CD4-positive, alpha-beta memory T cell (primary cell): ENCODE measurements at regions of chr1 and their contacts with region 1.

Region 1: DNA sequence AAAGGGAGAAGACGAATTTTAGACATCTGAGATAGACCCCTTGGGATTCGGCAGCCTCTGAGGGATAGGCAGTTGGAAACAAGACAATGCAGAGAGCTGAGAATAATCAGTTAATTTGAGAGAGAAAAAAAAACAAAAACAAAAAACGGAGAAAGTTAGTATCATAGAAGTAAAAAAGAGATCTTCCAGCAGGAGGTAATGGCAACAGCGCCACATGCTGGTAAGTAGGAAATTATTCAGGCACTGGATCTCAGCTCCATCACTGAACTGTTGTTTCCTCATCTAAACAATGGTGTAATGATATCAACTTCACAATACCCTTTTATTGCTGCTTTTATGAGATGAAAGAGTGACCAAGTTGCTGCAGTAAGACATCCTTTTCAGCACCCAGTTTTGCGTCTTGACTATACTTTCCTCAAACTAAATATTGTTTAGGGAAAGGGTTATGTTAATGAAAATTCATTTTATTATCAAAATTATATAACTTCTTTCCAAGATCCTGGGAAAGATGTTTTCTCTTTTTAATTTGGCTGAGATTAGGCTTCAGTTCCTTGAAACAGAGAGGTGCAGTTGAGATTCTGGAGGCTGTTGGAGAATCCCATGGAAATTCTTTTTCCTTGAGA is 91.4 kb upstream of the KCNA3 start:
- DNase-seq: peak; percentile 59 to 71 (median 68)
- H3K4me3 ChIP-seq: no peak overlapping the region
- H3K4me3 Mint-ChIP-seq: no peak overlapping the region
- H3K27ac ChIP-seq: no peak overlapping the region
- H3K27ac Mint-ChIP-seq: peak overlapping the region in 1 of 7 donors; percentile 80
- H3K4me1 ChIP-seq: peaks cover 4% of the 10 kb centered on the region
- H3K4me1 Mint-ChIP-seq: peaks cover 0 to 9% (median 2%) of the 10 kb centered on the region in 4 donors
- H3K27me3 ChIP-seq: no peaks in the 10 kb centered on the region
- H3K27me3 Mint-ChIP-seq: peaks cover 12% of the 10 kb centered on the region in 2 donors

Region 2: DNA sequence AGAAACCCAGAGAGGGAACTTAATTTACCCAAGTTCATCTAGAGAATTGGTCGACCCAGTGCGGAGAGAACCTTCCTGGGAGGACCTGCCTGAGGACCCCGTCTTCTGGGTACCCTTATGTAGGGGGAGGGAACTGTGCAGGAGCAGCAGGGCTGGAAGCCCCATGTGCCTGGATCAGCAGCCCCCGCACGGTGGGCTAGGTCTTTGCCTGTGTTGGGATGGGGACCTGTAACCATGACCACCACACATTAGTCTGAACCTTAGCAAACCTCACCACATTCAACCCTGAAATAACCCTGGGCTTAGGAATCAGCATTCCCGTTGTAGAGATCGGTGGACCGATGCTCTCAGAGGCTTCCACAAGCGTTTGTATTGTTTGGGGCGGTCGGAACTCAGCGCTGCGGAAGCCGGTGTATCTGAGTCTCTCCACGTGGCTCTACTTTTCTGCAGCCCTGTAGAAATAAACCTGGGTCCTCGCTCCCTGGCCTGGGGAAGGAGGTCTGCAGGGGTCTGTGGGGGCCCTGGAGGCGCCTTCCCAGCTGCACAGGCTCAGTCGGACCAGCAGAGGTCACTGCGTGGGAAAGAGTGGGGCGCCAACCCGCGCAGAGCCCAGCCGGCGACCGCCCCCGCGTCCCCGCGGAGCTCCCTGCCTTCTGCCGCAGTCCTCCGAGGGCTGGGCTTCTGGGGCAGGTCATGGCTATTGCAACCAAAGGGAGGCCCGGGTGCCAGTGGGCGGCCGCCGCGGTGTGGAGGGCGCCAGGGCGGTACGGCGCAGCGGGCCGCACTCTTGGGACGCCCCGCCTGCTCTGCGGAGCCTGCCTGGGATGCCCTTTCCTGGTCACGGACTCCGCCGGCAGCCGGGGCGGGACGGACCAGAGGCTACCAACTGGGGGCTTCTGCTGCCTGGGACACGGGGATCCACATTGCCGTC is 211.0 kb before region 1 on chr1:
- CTCF ChIA-PET with region 1: interaction called, 37 read pairs
- POLR2A ChIA-PET with region 1: no interaction called
- intact Hi-C with region 1: loop called (anchors 1 kb)
- DNase-seq: peak in 4 of 5 donors; percentile 43 to 56 (median 51)
- H3K4me3 ChIP-seq: no peak overlapping the region
- H3K4me3 Mint-ChIP-seq: peak overlapping the region in 6 of 8 donors; percentile 29 to 68 (median 50)
- H3K27ac ChIP-seq: no peak overlapping the region
- H3K27ac Mint-ChIP-seq: no peak overlapping the region
- H3K4me1 ChIP-seq: peaks cover 3% of the 10 kb centered on the region
- H3K4me1 Mint-ChIP-seq: peaks cover 2 to 9% (median 4%) of the 10 kb centered on the region in 4 donors
- H3K27me3 ChIP-seq: peaks cover 18% of the 10 kb centered on the region
- H3K27me3 Mint-ChIP-seq: peaks cover 30 to 43% of the 10 kb centered on the region in 2 donors

Region 3: GRCh38 chr1:110605901-110606656 is 160.1 kb before region 1 on chr1 and contains the start of gene KCNA2:
- CTCF ChIA-PET with region 1: interaction called, 15 read pairs
- POLR2A ChIA-PET with region 1: interaction called, 7 read pairs
- intact Hi-C with region 1: no loop called
- DNase-seq: peak in 1 of 5 donors; percentile 15
- H3K4me3 ChIP-seq: peak within 1 kb of the TSS; percentile 54 to 59
- H3K4me3 Mint-ChIP-seq: peak within 1 kb of the TSS; percentile 81 to 90 (median 84)
- H3K27ac ChIP-seq: no peak within 1 kb of the TSS
- H3K27ac Mint-ChIP-seq: peak within 1 kb of the TSS in 1 of 7 donors; percentile 47
- H3K4me1 ChIP-seq: peaks cover 21% of the 10 kb centered on the region
- H3K4me1 Mint-ChIP-seq: peaks cover 6 to 30% (median 16%) of the 10 kb centered on the region in 4 donors
- H3K27me3 ChIP-seq: peaks cover 31% of the 10 kb centered on the region
- H3K27me3 Mint-ChIP-seq: peaks cover 25 to 47% of the 10 kb centered on the region in 2 donors
- total RNA-seq, gene KCNA2: 1.2 to 2.2 TPM

Region 4: DNA sequence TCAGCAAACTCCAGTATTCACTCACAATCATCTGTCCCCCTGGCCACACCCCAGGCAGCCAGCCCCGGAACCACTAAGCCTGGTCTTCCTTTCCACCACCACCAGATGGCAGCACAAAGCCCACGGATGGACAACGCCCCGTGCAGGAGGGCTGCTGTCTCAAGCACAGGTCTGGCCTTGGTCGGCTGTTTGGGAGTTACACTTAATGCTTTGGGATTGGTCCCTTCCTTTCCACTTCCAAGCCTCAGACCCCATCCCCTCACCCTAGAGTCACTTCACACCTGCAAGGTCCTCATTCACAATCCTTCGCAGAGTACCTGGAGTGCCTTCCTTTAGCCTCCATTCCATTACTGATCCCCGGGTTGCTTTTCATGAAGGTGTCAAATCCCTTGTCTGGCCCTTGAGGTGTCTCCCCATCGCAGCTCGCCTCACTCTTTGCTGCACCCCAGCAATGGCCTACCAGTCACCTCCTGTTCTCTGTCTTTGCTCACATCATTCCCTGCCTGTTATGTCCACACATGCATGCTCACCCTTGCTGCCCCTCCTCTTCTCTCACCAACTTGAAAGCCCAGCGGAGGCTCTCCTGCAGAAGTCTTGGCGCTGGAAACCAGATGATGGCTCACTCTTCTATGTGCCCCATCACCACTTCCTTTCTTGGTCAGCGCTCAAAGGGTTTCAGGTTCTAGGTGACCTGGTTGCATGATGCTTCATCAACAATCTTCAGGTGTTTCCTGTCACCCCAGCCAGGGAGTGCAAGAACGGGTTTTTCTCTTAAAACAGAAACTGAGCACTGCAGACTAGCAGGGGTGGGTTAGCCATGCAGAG is 135.1 kb before region 1 on chr1:
- CTCF ChIA-PET with region 1: interaction called, 73 read pairs
- POLR2A ChIA-PET with region 1: interaction called, 35 read pairs
- intact Hi-C with region 1: loop called (anchors 1 kb)
- DNase-seq: peak; percentile 87 to 92 (median 88)
- H3K4me3 ChIP-seq: peak overlapping the region; percentile 25 to 46
- H3K4me3 Mint-ChIP-seq: no peak overlapping the region
- H3K27ac ChIP-seq: peak overlapping the region; percentile 72
- H3K27ac Mint-ChIP-seq: no peak overlapping the region
- H3K4me1 ChIP-seq: peaks cover 95% of the 10 kb centered on the region
- H3K4me1 Mint-ChIP-seq: peaks cover 32 to 57% (median 54%) of the 10 kb centered on the region in 4 donors
- H3K27me3 ChIP-seq: no peaks in the 10 kb centered on the region
- H3K27me3 Mint-ChIP-seq: no peaks in the 10 kb centered on the region

Region 5: GRCh38 chr1:110686188-110686587 is 79.9 kb before region 1 on chr1:
- CTCF ChIA-PET with region 1: interaction called, 10 read pairs
- POLR2A ChIA-PET with region 1: interaction called, 3 read pairs
- intact Hi-C with region 1: no loop called
- DNase-seq: peak in 4 of 5 donors; percentile 23 to 43 (median 34)
- H3K4me3 ChIP-seq: no peak overlapping the region
- H3K4me3 Mint-ChIP-seq: no peak overlapping the region
- H3K27ac ChIP-seq: no peak overlapping the region
- H3K27ac Mint-ChIP-seq: peak overlapping the region in 2 of 7 donors; percentile 19 to 56
- H3K4me1 ChIP-seq: no peaks in the 10 kb centered on the region
- H3K4me1 Mint-ChIP-seq: peaks cover 0 to 6% (median 5%) of the 10 kb centered on the region in 4 donors
- H3K27me3 ChIP-seq: no peaks in the 10 kb centered on the region
- H3K27me3 Mint-ChIP-seq: no peaks in the 10 kb centered on the region

Region 6: GRCh38 chr1:110749960-110750359 is 16.2 kb before region 1 on chr1:
- CTCF ChIA-PET with region 1: interaction called, 14 read pairs
- POLR2A ChIA-PET with region 1: interaction called, 3 read pairs
- intact Hi-C with region 1: no loop called
- DNase-seq: no peak
- H3K4me3 ChIP-seq: no peak overlapping the region
- H3K4me3 Mint-ChIP-seq: no peak overlapping the region
- H3K27ac ChIP-seq: no peak overlapping the region
- H3K27ac Mint-ChIP-seq: no peak overlapping the region
- H3K4me1 ChIP-seq: no peaks in the 10 kb centered on the region
- H3K4me1 Mint-ChIP-seq: no peaks in the 10 kb centered on the region
- H3K27me3 ChIP-seq: no peaks in the 10 kb centered on the region
- H3K27me3 Mint-ChIP-seq: peaks cover 14 to 15% of the 10 kb centered on the region in 2 donors

Region 7: GRCh38 chr1:110846861-110847260 is 80.7 kb after region 1 on chr1:
- CTCF ChIA-PET with region 1: no interaction called
- POLR2A ChIA-PET with region 1: no interaction called
- intact Hi-C with region 1: no loop called
- DNase-seq: no peak
- H3K4me3 ChIP-seq: no peak overlapping the region
- H3K4me3 Mint-ChIP-seq: no peak overlapping the region
- H3K27ac ChIP-seq: no peak overlapping the region
- H3K27ac Mint-ChIP-seq: no peak overlapping the region
- H3K4me1 ChIP-seq: no peaks in the 10 kb centered on the region
- H3K4me1 Mint-ChIP-seq: peaks cover 0 to 2% (median 0%) of the 10 kb centered on the region in 4 donors
- H3K27me3 ChIP-seq: no peaks in the 10 kb centered on the region
- H3K27me3 Mint-ChIP-seq: peaks cover 0 to 10% of the 10 kb centered on the region in 2 donors